AG04449 (cell line): ENCODE measurements at regions of chr1 and their contacts with region 1.

Region 1: GRCh38 chr1:89483010-89483756 is 41.4 kb upstream of the LRRC8B start:
- DNase-seq: peak; percentile 50
- H3K4me3 ChIP-seq: no peak overlapping the region
- CTCF ChIP-seq: peak; percentile 75

Region 2: GRCh38 chr1:88655685-88656299 is 827.4 kb before region 1 on chr1:
- CTCF ChIA-PET with region 1: no interaction called
- POLR2A ChIA-PET with region 1: no interaction called
- DNase-seq: no peak
- H3K4me3 ChIP-seq: no peak overlapping the region
- CTCF ChIP-seq: peak; percentile 25

Region 3: GRCh38 chr1:89499320-89499719 is 16.1 kb after region 1 on chr1:
- CTCF ChIA-PET with region 1: interaction called, 26 read pairs
- POLR2A ChIA-PET with region 1: no interaction called
- DNase-seq: no peak
- H3K4me3 ChIP-seq: no peak overlapping the region
- CTCF ChIP-seq: no peak

Region 4: GRCh38 chr1:89538361-89538760 is 55.2 kb after region 1 on chr1:
- CTCF ChIA-PET with region 1: no interaction called
- POLR2A ChIA-PET with region 1: no interaction called
- DNase-seq: no peak
- H3K4me3 ChIP-seq: no peak overlapping the region
- CTCF ChIP-seq: no peak

Region 5: GRCh38 chr1:89598450-89599331 is 115.5 kb after region 1 on chr1:
- CTCF ChIA-PET with region 1: interaction called, 168 read pairs
- POLR2A ChIA-PET with region 1: no interaction called
- DNase-seq: no peak
- H3K4me3 ChIP-seq: no peak overlapping the region
- CTCF ChIP-seq: peak; percentile 47

Region 6: DNA sequence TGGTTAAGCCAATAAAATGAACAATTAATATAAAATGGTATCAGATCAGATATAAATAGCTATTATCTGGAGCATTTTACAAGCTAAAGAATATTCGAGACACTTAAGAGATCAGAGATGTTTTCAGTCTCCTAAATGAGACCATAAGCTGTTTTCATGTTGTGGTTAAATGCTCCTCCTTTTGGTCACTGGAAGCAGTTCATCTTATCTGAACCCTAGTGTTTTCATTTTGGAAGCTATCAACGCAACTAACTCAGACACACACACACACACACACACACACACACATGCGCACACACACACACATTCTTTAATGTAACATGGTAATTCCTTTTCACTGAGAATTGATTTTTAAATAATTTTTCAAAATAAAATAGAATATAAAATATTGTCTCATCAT is 139.7 kb after region 1 on chr1:
- CTCF ChIA-PET with region 1: interaction called, 22 read pairs
- POLR2A ChIA-PET with region 1: no interaction called
- DNase-seq: no peak
- H3K4me3 ChIP-seq: no peak overlapping the region
- CTCF ChIP-seq: no peak